HepG2 (cell line): ENCODE measurements at regions of chr17 and their contacts with region 1.

Region 1: GRCh38 chr17:60372790-60373483 is 19.0 kb downstream of the USP32 start:
- DNase-seq: no peak
- ATAC-seq: peak; percentile 62
- H3K4me3 ChIP-seq: no peak overlapping the region
- H3K27ac ChIP-seq: no peak overlapping the region
- H3K4me1 ChIP-seq: peaks cover 19% of the 10 kb centered on the region
- H3K27me3 ChIP-seq: no peaks in the 10 kb centered on the region
- CTCF ChIP-seq: no peak
- EP300 ChIP-seq: no peak
- POLR2A ChIP-seq: no peak
- RAD21 ChIP-seq: no peak

Region 2: GRCh38 chr17:60327122-60327900 is 45.6 kb before region 1 on chr17:
- CTCF ChIA-PET with region 1: no interaction called
- POLR2A ChIA-PET with region 1: no interaction called
- in situ Hi-C with region 1: no loop called
- intact Hi-C with region 1: loop called (anchors 10 kb)
- DNase-seq: no peak
- ATAC-seq: peak; percentile 23; the same call in 2 of the 3 replicates
- H3K4me3 ChIP-seq: no peak overlapping the region
- H3K27ac ChIP-seq: no peak overlapping the region
- H3K4me1 ChIP-seq: peaks cover 15% of the 10 kb centered on the region
- H3K27me3 ChIP-seq: no peaks in the 10 kb centered on the region
- CTCF ChIP-seq: no peak
- EP300 ChIP-seq: no peak
- POLR2A ChIP-seq: no peak
- RAD21 ChIP-seq: no peak